A673 (cell line): ENCODE measurements at regions of chr5 and their contacts with region 1.

Region 1: GRCh38 chr5:158695595-158696330 is 404.0 kb downstream of the EBF1 start:
- DNase-seq: peak; percentile 81
- H3K4me3 ChIP-seq: no peak overlapping the region
- H3K27ac ChIP-seq: no peak overlapping the region
- H3K4me1 ChIP-seq: no peaks in the 10 kb centered on the region
- H3K27me3 ChIP-seq: no peaks in the 10 kb centered on the region
- CTCF ChIP-seq: peak; percentile 94

Region 2: GRCh38 chr5:158770506-158770905 is 74.7 kb after region 1 on chr5:
- CTCF ChIA-PET with region 1: no interaction called
- POLR2A ChIA-PET with region 1: no interaction called
- intact Hi-C with region 1: loop called (anchors 5 kb)
- DNase-seq: peak; percentile 30
- H3K4me3 ChIP-seq: no peak overlapping the region
- H3K27ac ChIP-seq: no peak overlapping the region
- H3K4me1 ChIP-seq: no peaks in the 10 kb centered on the region
- H3K27me3 ChIP-seq: no peaks in the 10 kb centered on the region
- CTCF ChIP-seq: peak; percentile 55

Region 3: GRCh38 chr5:159049844-159050315 is 354.1 kb after region 1 on chr5:
- CTCF ChIA-PET with region 1: no interaction called
- POLR2A ChIA-PET with region 1: no interaction called
- intact Hi-C with region 1: loop called (anchors 10 kb)
- DNase-seq: peak; percentile 54
- H3K4me3 ChIP-seq: no peak overlapping the region
- H3K27ac ChIP-seq: no peak overlapping the region
- H3K4me1 ChIP-seq: peaks cover 8% of the 10 kb centered on the region
- H3K27me3 ChIP-seq: no peaks in the 10 kb centered on the region
- CTCF ChIP-seq: peak; percentile 61

Region 4: GRCh38 chr5:159073026-159073425 is 377.3 kb after region 1 on chr5:
- CTCF ChIA-PET with region 1: no interaction called
- POLR2A ChIA-PET with region 1: no interaction called
- intact Hi-C with region 1: no loop called
- DNase-seq: no peak
- H3K4me3 ChIP-seq: no peak overlapping the region
- H3K27ac ChIP-seq: no peak overlapping the region
- H3K4me1 ChIP-seq: no peaks in the 10 kb centered on the region
- H3K27me3 ChIP-seq: no peaks in the 10 kb centered on the region
- CTCF ChIP-seq: no peak